GM12878 (cell line): ENCODE measurements at regions of chr12 and their contacts with region 1.

Region 1: GRCh38 chr12:14239350-14239934 is 126.0 kb upstream of the ATF7IP start:
- DNase-seq: peak; percentile 86
- ATAC-seq: peak; percentile 90
- H3K4me3 ChIP-seq: peak overlapping the region; percentile 42; the same call in 1 of the 2 replicates
- H3K27ac ChIP-seq: peak overlapping the region; percentile 99
- H3K4me1 ChIP-seq: peaks cover 23% of the 10 kb centered on the region
- H3K27me3 ChIP-seq: no peaks in the 10 kb centered on the region
- CTCF ChIP-seq: peak; percentile 30 to 47 (median 30); a peak in 4 of 6 replicates
- EP300 ChIP-seq: peak; percentile 40 to 53; a peak in 2 of 4 replicates
- POLR2A ChIP-seq: no peak
- RAD21 ChIP-seq: peak; percentile 34; the same call in 1 of the 2 replicates

Region 2: DNA sequence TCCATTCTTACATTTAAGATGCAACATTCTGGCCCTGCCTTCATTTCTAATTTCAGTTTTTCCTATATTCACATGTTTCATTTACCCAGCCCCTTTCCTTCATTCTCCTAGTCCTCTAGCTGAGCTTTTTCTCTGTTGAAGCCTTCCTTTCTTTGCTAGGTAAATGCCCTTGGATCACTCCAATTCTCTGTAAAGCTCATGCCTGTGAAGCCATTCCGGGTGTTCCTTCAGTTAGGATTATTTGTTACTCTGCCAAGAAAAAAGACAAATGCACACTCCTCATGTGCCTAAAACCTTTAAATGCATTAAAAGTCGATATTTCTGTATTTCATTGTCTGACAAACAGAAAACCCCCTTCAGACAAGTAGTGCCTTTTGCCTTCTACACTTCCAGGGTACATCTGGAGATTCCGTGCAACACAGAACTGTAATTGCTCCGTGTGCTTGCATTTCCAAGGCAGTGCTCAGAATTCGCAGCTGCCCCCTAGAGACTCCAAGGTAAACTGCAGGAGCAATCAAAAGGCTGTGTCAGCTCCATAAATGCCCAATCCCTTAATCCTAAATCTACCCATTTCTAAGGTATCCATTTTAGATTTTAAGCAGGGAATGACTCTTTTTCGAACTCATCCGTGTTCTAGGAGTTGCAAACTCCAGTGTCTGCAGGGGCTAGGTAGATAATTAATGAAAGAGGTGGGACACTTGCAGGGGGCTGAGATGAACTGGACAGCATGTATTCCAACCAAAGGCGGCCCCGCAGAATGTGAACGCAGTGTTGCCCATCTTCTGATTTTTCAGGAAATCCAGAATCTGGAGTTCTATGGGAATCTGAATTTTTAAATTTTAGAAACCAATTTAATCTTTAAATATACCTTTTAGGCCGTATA is 578.2 kb before region 1 on chr12:
- CTCF ChIA-PET with region 1: no interaction called
- POLR2A ChIA-PET with region 1: no interaction called
- RAD21 ChIA-PET with region 1: no interaction called
- SMC1A ChIA-PET with region 1: no interaction called
- in situ Hi-C with region 1: no loop called
- intact Hi-C with region 1: no loop called
- DNase-seq: peak; percentile 3
- ATAC-seq: peak; percentile 93
- H3K4me3 ChIP-seq: no peak overlapping the region
- H3K27ac ChIP-seq: no peak overlapping the region
- H3K4me1 ChIP-seq: no peaks in the 10 kb centered on the region
- H3K27me3 ChIP-seq: 0 out of 4 replicates have a peak, but pooled peaks cover 0 to 4% of the 10 kb centered on the region in 2 experiments
- CTCF ChIP-seq: peak; percentile 82 to 88 (median 83)
- EP300 ChIP-seq: no peak
- POLR2A ChIP-seq: no peak
- RAD21 ChIP-seq: peak; percentile 80

Region 3: GRCh38 chr12:14185427-14186192 is 53.8 kb before region 1 on chr12:
- CTCF ChIA-PET with region 1: interaction called, 30 read pairs
- POLR2A ChIA-PET with region 1: no interaction called
- RAD21 ChIA-PET with region 1: interaction called, 17 read pairs
- SMC1A ChIA-PET with region 1: interaction called, 35 read pairs
- in situ Hi-C with region 1: no loop called
- intact Hi-C with region 1: no loop called
- DNase-seq: no peak
- ATAC-seq: peak; percentile 91
- H3K4me3 ChIP-seq: no peak overlapping the region
- H3K27ac ChIP-seq: no peak overlapping the region
- H3K4me1 ChIP-seq: peaks cover 4% of the 10 kb centered on the region; the same call in 1 of the 2 replicates
- H3K27me3 ChIP-seq: no peaks in the 10 kb centered on the region
- CTCF ChIP-seq: peak; percentile 65 to 85 (median 68)
- EP300 ChIP-seq: no peak
- POLR2A ChIP-seq: no peak
- RAD21 ChIP-seq: peak; percentile 67

Region 4: DNA sequence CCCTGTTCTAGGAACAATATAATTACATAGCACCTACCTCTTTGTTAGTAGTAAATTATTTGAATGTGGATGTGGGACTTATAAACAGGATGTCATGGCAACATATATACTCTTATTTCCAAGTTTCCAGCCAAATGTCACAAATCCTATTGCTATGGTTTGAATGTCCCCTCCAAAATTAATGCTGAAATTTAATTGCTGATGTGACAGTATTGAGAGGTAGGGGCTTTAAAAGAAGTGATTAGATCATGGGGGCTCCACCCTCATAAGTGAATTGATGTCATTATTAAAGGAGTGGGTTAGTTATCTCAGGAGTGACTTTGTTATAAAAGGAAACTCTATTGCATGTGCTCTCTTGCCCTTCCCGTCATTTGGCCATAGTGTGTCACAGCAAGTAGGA is 38.2 kb before region 1 on chr12:
- CTCF ChIA-PET with region 1: no interaction called
- POLR2A ChIA-PET with region 1: no interaction called
- RAD21 ChIA-PET with region 1: no interaction called
- SMC1A ChIA-PET with region 1: no interaction called
- in situ Hi-C with region 1: no loop called
- intact Hi-C with region 1: no loop called
- DNase-seq: no peak
- ATAC-seq: no peak
- H3K4me3 ChIP-seq: no peak overlapping the region
- H3K27ac ChIP-seq: no peak overlapping the region
- H3K4me1 ChIP-seq: no peaks in the 10 kb centered on the region
- H3K27me3 ChIP-seq: no peaks in the 10 kb centered on the region
- CTCF ChIP-seq: no peak
- EP300 ChIP-seq: no peak
- POLR2A ChIP-seq: no peak
- RAD21 ChIP-seq: no peak

Region 5: DNA sequence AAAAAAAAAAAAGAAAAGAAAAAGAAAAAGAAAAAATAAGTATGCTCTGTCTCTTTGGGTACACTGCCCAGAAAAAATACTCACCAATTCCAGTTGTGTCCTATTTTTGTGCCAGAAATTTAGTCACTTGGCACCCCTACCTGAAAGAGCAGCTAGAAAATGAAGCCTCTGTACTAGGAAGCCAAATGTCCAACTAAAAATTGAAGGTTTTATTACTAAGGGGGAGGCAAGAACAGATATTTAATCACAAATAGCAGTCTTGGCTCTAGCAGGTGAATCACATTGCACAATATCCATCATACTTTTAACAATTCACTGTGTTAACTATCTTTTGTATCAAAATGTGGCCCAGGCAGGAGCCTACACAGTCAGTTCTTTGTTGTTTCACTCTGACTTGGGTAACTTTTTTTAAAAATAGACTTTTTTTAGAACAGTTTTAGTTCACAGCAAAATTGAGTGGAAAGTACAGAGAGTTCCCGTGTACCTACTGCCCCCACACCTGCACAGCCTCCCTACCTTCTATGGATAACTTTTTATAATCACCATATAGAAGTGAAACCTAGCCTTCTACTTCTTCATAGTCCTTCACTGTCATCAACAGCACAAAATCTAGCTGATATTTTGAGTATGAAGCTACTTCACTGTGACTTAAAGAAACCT is 39.0 kb after region 1 on chr12:
- CTCF ChIA-PET with region 1: interaction called, 7 read pairs
- POLR2A ChIA-PET with region 1: no interaction called
- RAD21 ChIA-PET with region 1: interaction called, 14 read pairs
- SMC1A ChIA-PET with region 1: interaction called, 17 read pairs
- in situ Hi-C with region 1: no loop called
- intact Hi-C with region 1: loop called (anchors 1 kb)
- DNase-seq: no peak
- ATAC-seq: peak; percentile 62
- H3K4me3 ChIP-seq: no peak overlapping the region
- H3K27ac ChIP-seq: peak overlapping the region; percentile 85
- H3K4me1 ChIP-seq: peaks cover 27% of the 10 kb centered on the region
- H3K27me3 ChIP-seq: no peaks in the 10 kb centered on the region
- CTCF ChIP-seq: no peak
- EP300 ChIP-seq: no peak
- POLR2A ChIP-seq: no peak
- RAD21 ChIP-seq: no peak

Region 6: DNA sequence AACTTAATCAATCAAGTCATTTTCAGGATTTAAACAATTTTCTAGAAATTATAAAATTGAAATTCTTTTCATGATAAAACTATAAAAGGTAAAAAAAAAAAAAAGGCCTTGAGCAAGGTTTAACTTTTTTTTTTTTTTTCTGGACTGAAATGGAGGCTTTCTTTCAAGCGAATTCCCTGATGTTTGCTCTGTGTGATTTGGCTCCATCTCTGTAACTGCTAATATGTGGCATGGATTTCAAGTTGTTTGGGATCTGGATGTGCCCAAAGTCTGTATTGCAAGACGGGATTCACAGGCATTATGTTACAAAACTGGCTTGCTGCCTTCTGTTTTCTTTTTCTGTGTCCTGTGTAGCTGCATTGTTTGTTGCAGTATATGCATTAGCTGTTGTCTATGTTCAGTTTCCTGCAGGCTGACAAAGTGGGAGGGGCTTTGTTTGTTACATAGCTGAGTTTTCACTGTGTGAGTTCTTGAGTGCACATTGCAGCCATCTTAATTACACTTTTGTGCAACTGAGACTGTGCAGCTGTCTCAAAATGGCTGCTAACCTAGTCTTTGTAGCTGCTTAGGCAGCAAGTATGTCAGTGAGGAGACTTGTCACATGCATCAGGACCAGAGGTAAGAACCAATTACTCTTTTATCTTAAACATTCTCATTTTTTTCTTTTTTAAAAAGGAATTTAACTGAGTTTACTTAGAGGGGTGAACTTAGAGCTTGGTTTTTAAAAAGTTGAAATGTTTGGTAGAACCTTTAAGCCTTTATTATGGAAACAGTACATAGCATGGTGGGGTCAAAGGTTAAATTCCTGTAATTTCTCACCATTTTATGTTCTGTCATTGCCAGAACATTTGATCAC is 145.6 kb after region 1 on chr12:
- CTCF ChIA-PET with region 1: interaction called, 23 read pairs
- POLR2A ChIA-PET with region 1: no interaction called
- RAD21 ChIA-PET with region 1: interaction called, 10 read pairs
- SMC1A ChIA-PET with region 1: interaction called, 26 read pairs
- in situ Hi-C with region 1: no loop called
- intact Hi-C with region 1: no loop called
- DNase-seq: peak; percentile 92
- ATAC-seq: peak; percentile 90
- H3K4me3 ChIP-seq: peak overlapping the region; percentile 18; the same call in 1 of the 2 replicates
- H3K27ac ChIP-seq: peak overlapping the region; percentile 63
- H3K4me1 ChIP-seq: peaks cover 5% of the 10 kb centered on the region
- H3K27me3 ChIP-seq: no peaks in the 10 kb centered on the region
- CTCF ChIP-seq: no peak
- EP300 ChIP-seq: no peak; a peak in 1 of 4 replicates
- POLR2A ChIP-seq: peak; percentile 46; the same call in 1 of the 2 replicates
- RAD21 ChIP-seq: no peak

Region 7: GRCh38 chr12:14514154-14514842 is 274.9 kb after region 1 on chr12:
- CTCF ChIA-PET with region 1: interaction called, 5 read pairs
- POLR2A ChIA-PET with region 1: no interaction called
- RAD21 ChIA-PET with region 1: interaction called, 18 read pairs
- SMC1A ChIA-PET with region 1: interaction called, 6 read pairs
- in situ Hi-C with region 1: no loop called
- intact Hi-C with region 1: no loop called
- DNase-seq: no peak
- ATAC-seq: peak; percentile 72
- H3K4me3 ChIP-seq: no peak overlapping the region
- H3K27ac ChIP-seq: no peak overlapping the region
- H3K4me1 ChIP-seq: no peaks in the 10 kb centered on the region
- H3K27me3 ChIP-seq: no peaks in the 10 kb centered on the region
- CTCF ChIP-seq: peak; percentile 37 to 48 (median 42); a peak in 5 of 6 replicates
- EP300 ChIP-seq: no peak
- POLR2A ChIP-seq: no peak
- RAD21 ChIP-seq: peak; percentile 79

Region 8: DNA sequence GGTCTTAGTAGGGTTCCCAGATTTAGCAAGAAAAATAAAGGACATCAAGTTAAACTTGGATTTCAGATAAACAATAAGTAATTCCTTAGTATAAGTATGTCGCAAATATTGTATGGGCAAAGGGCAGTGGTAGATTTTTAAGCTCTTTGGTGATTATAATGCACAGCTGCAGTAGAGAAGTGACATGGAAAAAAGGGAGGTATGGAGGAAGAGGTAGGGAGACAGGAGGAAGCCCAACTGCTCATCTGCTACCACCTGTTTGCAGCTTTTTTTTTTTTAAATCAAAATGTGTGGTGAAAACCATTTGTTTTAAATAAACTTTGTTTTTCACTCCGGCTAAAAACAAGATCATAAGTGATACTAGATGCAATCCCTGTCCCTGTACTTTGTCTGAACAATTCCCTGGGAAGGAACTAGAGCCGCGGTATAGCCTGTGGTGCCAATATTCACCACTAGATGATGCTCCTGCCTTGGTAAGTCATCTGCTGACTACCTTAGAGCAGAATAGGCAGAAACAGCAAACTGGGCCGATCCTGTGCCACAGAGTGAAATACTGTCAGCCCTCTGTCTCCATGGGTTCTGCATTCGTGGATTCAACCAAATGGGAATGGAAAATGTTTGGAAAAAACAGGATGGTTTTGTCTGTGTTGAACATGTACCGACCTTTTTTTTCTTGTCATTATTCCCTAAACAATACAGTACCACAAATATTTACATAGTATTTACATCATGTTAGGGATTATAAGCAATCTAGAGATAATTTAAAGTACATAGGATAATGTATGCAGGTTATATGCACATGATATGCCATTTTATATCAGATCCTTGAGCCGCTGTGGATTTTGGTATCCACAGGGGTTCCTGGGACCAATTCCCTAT is 390.6 kb after region 1 on chr12:
- CTCF ChIA-PET with region 1: interaction called, 52 read pairs
- POLR2A ChIA-PET with region 1: no interaction called
- RAD21 ChIA-PET with region 1: interaction called, 10 read pairs
- SMC1A ChIA-PET with region 1: interaction called, 54 read pairs
- in situ Hi-C with region 1: no loop called
- intact Hi-C with region 1: loop called (anchors 2 kb)
- DNase-seq: no peak
- ATAC-seq: peak; percentile 100
- H3K4me3 ChIP-seq: no peak overlapping the region
- H3K27ac ChIP-seq: no peak overlapping the region
- H3K4me1 ChIP-seq: no peaks in the 10 kb centered on the region
- H3K27me3 ChIP-seq: no peaks in the 10 kb centered on the region
- CTCF ChIP-seq: peak; percentile 98 to 100 (median 99); a peak in 5 of 6 replicates
- EP300 ChIP-seq: no peak
- POLR2A ChIP-seq: no peak
- RAD21 ChIP-seq: peak; percentile 100

Region 9: DNA sequence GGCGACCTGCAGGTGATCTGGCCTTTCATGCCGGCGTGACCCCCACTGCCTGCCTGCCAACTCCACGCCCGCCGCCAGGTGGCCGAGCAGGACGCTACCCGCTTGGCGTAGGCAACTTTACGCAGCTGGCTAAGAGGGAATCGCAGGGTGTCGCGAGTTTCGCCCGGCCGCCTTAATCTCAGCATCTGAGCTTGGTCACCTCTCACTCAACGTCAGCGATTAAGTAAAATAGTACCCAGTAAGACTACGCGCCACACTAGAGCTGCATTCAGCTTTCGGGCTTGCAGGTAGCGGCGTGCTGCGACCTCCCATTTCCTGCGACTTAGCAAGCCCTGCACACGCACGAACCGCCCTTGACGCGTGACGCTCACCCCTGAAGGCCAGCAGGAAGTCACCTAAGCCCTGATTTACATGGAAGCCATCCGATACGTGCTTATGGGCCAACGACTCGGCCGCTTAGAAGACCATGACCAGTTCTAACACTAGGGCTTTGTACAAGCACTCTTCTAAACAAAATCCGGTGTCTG is 530.6 kb after region 1 on chr12:
- CTCF ChIA-PET with region 1: interaction called, 8 read pairs
- POLR2A ChIA-PET with region 1: no interaction called
- RAD21 ChIA-PET with region 1: interaction called, 4 read pairs
- SMC1A ChIA-PET with region 1: interaction called, 6 read pairs
- in situ Hi-C with region 1: no loop called
- intact Hi-C with region 1: loop called (anchors 5 kb)
- DNase-seq: peak; percentile 84
- ATAC-seq: peak; percentile 63
- H3K4me3 ChIP-seq: peak overlapping the region; percentile 83
- H3K27ac ChIP-seq: peak overlapping the region; percentile 99
- H3K4me1 ChIP-seq: peaks cover 2% of the 10 kb centered on the region
- H3K27me3 ChIP-seq: no peaks in the 10 kb centered on the region
- CTCF ChIP-seq: peak; percentile 81 to 87 (median 87)
- EP300 ChIP-seq: peak; percentile 11 to 58; a peak in 3 of 4 replicates
- POLR2A ChIP-seq: peak; percentile 89
- RAD21 ChIP-seq: peak; percentile 37; the same call in 1 of the 2 replicates